HCT116 (cell line): ENCODE measurements at regions of chr4 and their contacts with region 1.

Region 1: DNA sequence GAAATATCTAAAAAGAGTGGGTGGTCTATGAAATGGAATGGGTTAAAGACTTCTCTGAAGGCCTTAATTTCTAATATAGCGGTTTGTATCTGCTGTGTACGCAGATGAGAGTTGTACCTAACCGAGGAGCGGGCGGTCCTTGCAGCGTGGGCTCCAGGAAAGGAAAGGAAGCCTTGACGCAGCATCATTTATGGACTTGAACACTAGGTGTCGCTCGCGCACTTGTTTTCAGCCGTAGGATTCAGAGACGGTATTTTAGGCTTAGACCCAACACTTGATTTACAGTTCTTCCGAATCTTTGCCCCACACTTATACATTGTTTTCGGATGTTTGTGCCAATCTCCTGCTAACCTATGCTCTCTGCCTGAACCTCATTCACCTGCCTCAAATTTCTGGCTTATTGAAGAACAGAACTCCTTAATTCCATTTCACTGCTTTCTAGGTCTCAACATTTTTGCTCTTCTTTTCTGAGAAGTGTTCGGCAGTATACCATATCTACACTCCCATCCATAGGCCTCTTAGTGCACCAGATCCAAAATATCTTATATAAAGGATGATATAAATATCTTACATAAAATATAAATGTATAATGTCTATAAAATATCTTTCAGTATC is 48.9 kb upstream of the AADAT start:
- DNase-seq: peak; percentile 71
- ATAC-seq: peak; percentile 97
- H3K4me3 ChIP-seq: no peak overlapping the region
- H3K27ac ChIP-seq: no peak overlapping the region
- H3K4me1 ChIP-seq: no peaks in the 10 kb centered on the region
- H3K27me3 ChIP-seq: no peaks in the 10 kb centered on the region
- CTCF ChIP-seq: peak; percentile 68 to 81 (median 70)
- POLR2A ChIP-seq: no peak
- RAD21 ChIP-seq: peak; percentile 90

Region 2: DNA sequence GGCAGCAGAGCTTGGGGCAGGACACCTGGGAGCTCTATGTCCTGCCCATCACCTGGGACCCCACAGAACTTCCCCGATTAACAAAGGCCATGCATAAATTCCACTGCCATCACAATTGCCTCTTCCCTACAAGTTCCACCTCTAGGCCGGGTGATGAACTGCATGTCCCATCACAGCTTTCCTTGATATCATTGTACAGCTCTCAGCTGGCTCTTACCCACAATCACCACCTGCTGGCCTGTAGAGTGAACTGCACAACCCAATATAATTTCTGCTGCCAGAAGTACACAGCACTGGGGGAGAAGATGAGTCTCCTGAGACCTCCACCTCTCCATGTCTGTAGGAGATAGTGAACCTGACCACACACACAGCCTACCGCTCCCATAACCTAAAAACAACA is 236.1 kb after region 1 on chr4:
- CTCF ChIA-PET with region 1: no interaction called
- POLR2A ChIA-PET with region 1: no interaction called
- RAD21 ChIA-PET with region 1: no interaction called
- intact Hi-C with region 1: loop called (anchors 2 kb)
- DNase-seq: peak; percentile 40
- ATAC-seq: peak; percentile 97
- H3K4me3 ChIP-seq: no peak overlapping the region
- H3K27ac ChIP-seq: no peak overlapping the region
- H3K4me1 ChIP-seq: no peaks in the 10 kb centered on the region
- H3K27me3 ChIP-seq: no peaks in the 10 kb centered on the region
- CTCF ChIP-seq: peak; percentile 73 to 81 (median 78); a peak in 5 of 6 replicates
- POLR2A ChIP-seq: no peak
- RAD21 ChIP-seq: peak; percentile 57